Psoas muscle (tissue), 8 donors: ENCODE measurements at regions of chr9 and their contacts with region 1.

Region 1: DNA sequence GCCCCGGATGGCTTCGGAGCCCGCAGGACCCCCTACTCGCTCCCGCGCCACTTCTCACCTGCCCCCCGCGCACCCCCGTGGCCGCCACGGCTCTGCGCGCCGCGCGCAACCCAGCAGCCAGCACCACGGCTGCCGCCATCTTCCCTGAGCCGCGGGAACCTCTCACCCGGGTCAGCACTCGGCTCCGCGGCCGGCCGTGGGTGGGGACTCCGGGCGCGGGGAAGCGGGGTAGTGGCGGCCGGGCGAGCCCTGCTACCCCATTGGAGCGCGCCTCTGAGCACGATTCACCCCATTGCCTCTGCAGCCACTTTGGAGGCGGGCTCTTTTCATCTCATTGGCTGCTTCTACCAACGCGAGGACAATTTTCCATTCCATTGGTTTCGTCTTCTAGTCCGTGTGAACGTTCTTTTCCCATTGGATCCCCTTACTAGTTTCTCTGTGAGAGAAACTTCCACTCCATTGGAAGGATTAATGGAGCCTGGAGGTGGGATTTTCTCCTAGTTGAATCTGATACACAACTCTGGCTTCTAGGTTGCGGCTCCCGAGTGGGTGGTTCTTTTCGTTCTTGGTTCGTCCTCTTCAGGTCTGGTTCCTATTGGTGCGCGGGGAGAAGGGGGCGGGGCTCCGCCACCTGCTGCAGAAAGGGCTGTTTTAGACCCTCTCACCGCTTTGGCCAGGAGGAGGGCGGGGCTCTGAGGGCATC is at the start of gene HINT2:
- DNase-seq: peak; percentile 95 to 96
- ATAC-seq: peak; percentile 90 to 93 (median 91)
- H3K4me3 ChIP-seq: peak within 1 kb of the TSS; percentile 93
- H3K27ac ChIP-seq: peak within 1 kb of the TSS; percentile 97
- H3K4me1 ChIP-seq: peaks cover 37% of the 10 kb centered on the region
- H3K27me3 ChIP-seq: no peaks in the 10 kb centered on the region
- CTCF ChIP-seq: no peak
- total RNA-seq, gene HINT2: 36.5 to 53.9 (median 42.3) TPM

Region 2: GRCh38 chr9:35748858-35749514 is 66.0 kb before region 1 on chr9 and contains the starts of genes GBA2 and RGP1:
- intact Hi-C with region 1: loop called in 1 of 2 experiments (anchors 2 kb)
- DNase-seq: peak; percentile 88 to 94
- ATAC-seq: peak; percentile 93 to 95 (median 94)
- H3K4me3 ChIP-seq: peak within 1 kb of the TSS; percentile 93
- H3K27ac ChIP-seq: peak within 1 kb of the TSS; percentile 90
- H3K4me1 ChIP-seq: peaks cover 42% of the 10 kb centered on the region
- H3K27me3 ChIP-seq: no peaks in the 10 kb centered on the region
- CTCF ChIP-seq: no peak
- total RNA-seq, gene GBA2: 36.1 to 83.6 (median 50.1) TPM
- total RNA-seq, gene RGP1: 32.3 to 51.0 (median 37.4) TPM

Region 3: GRCh38 chr9:37184905-37185867 is 1370.2 kb after region 1 on chr9:
- intact Hi-C with region 1: no loop called
- DNase-seq: no peak
- ATAC-seq: no peak
- H3K4me3 ChIP-seq: no peak overlapping the region
- H3K27ac ChIP-seq: no peak overlapping the region
- H3K4me1 ChIP-seq: no peaks in the 10 kb centered on the region
- H3K27me3 ChIP-seq: no peaks in the 10 kb centered on the region
- CTCF ChIP-seq: no peak